HCT116 (cell line): ENCODE measurements at regions of chr4 and their contacts with region 1.

Region 1: DNA sequence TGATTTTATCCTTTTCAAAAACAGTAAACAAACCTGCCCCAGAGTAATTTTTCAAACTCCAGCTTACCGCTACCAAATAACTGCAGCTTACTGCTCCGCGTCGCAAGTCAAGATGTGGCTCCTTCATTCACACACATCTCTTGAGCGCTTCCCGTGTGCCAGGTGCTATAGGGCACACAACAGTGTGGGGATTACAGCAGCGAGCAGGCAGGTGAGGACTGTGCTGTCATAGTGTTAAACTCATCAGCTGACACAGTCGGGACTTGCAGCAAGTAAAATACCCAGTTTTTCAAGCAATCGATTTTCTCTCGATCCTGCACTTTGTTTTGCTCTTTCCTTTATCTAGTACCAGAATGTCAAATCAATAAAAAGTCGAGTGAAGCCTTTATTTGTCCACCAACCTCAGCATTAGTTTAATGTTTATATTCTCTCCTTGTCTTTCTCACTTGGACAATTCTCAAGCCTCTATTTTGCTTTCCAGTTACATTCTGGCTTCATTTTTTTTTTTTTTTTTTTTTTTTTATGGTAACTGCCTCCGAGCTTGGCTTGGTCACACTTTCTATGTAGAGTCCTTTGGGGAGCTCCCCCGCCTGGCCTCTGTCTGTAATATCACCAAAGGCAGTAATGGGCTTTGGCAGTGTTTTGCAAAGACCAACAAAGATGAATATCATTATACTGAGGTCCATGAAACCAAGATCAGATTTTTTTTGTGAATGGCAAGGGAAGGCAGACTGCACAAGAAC is 8.3 kb upstream of the ASB5 start:
- DNase-seq: peak; percentile 39
- ATAC-seq: peak; percentile 96
- H3K4me3 ChIP-seq: no peak overlapping the region
- H3K27ac ChIP-seq: no peak overlapping the region
- H3K4me1 ChIP-seq: peaks cover 3 to 16% of the 10 kb centered on the region in 2 experiments; a peak in 3 of 4 replicates
- H3K27me3 ChIP-seq: no peaks in the 10 kb centered on the region
- CTCF ChIP-seq: peak; percentile 51 to 65 (median 65); a peak in 5 of 6 replicates
- POLR2A ChIP-seq: no peak
- RAD21 ChIP-seq: peak; percentile 64

Region 2: DNA sequence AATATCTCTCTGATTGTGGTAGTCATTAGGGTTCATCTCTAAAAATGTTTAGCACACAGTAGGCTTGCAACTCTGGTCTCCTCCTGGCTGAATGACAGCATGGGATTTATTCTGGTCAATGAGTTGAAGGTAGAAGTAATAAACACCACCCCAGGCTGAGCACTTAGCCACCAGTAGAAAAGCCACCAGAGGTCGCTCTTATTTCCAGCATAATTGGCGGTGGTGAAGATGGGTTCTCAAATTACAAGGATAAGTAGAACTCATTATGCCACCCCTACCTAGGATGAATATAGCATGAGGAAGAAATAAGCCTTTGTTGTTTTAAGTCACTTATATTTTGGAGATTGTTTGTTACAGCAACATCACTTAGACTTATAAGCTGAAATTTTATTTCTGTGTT is 768.0 kb before region 1 on chr4:
- CTCF ChIA-PET with region 1: no interaction called
- POLR2A ChIA-PET with region 1: no interaction called
- RAD21 ChIA-PET with region 1: no interaction called
- intact Hi-C with region 1: no loop called
- DNase-seq: peak; percentile 42
- ATAC-seq: peak; percentile 92
- H3K4me3 ChIP-seq: no peak overlapping the region
- H3K27ac ChIP-seq: no peak overlapping the region
- H3K4me1 ChIP-seq: no peaks in the 10 kb centered on the region
- H3K27me3 ChIP-seq: no peaks in the 10 kb centered on the region
- CTCF ChIP-seq: peak; percentile 24 to 75 (median 66); a peak in 5 of 6 replicates
- POLR2A ChIP-seq: no peak
- RAD21 ChIP-seq: peak; percentile 48

Region 3: DNA sequence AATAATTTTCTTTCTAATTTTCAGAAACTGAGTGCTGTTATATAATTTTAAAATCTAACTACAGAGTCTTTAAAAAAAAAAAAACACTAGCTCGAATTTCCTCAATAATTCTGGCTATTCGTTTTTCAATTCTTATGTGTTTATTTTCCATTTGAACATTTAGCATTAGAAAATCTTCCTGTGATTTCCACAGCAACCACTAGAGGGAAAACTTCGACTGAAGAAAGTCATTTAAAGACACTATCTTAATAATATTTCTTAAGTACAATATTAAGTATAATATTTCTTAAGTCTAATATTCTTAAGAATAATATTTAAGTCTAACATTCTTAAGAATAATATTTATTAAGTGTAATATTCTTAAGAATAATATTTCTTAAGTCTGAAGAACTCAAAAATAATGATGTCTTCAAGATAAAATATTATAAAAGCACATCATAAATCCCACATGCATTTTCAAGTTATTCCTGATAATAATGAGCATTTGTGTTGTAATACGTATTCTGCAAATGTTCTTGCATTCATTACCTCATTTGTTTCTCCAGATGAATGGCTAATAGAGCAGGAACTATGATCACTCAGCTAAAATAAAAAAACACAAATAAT is 330.1 kb before region 1 on chr4:
- CTCF ChIA-PET with region 1: no interaction called
- POLR2A ChIA-PET with region 1: no interaction called
- RAD21 ChIA-PET with region 1: no interaction called
- intact Hi-C with region 1: loop called (anchors 10 kb)
- DNase-seq: peak; percentile 27
- ATAC-seq: no peak
- H3K4me3 ChIP-seq: no peak overlapping the region
- H3K27ac ChIP-seq: no peak overlapping the region
- H3K4me1 ChIP-seq: no peaks in the 10 kb centered on the region
- H3K27me3 ChIP-seq: no peaks in the 10 kb centered on the region
- CTCF ChIP-seq: peak; percentile 41 to 52 (median 47); a peak in 4 of 6 replicates
- POLR2A ChIP-seq: no peak
- RAD21 ChIP-seq: peak; percentile 56; the same call in 1 of the 2 replicates

Region 4: DNA sequence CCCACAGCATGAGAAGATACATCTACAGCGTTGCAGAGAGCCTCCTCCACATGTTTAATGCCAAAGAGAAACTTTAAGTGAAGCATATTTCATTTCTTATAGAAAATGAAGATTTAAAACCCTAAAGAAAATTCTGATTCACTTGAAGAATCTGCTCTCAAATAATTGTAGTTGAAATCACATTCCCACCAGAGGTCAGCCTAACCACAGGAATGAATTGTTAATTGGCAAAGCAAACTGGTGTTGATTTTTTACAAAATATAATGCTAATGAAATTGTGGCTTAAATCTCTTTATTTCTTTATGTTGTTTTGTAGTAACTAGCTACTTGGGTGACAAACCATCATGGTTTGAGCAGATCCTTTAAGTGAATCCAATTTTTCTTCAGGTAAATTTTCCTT is 242.8 kb before region 1 on chr4:
- CTCF ChIA-PET with region 1: interaction called, 5 read pairs
- POLR2A ChIA-PET with region 1: no interaction called
- RAD21 ChIA-PET with region 1: no interaction called
- intact Hi-C with region 1: loop called (anchors 5 kb)
- DNase-seq: peak; percentile 27
- ATAC-seq: no peak
- H3K4me3 ChIP-seq: no peak overlapping the region
- H3K27ac ChIP-seq: no peak overlapping the region
- H3K4me1 ChIP-seq: no peaks in the 10 kb centered on the region
- H3K27me3 ChIP-seq: no peaks in the 10 kb centered on the region
- CTCF ChIP-seq: peak in 2 of 3 experiments; percentile 50 to 54; a peak in 3 of 6 replicates
- POLR2A ChIP-seq: no peak
- RAD21 ChIP-seq: peak; percentile 74

Region 5: DNA sequence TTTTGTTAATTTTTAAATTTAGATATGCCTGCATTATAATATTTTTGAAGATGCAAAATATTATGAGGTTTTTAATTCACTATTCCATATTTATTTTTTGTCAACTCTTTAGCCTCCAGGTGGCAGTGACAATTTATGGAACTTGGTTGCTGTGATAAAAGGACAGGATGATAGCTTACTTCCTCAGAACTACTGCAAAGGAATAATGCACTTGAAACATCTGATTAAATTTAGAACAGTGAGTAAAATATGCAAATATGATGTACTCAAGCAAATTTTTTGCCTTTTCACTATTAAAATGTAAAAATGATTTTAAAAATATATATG is 127.0 kb before region 1 on chr4:
- CTCF ChIA-PET with region 1: interaction called, 4 read pairs
- POLR2A ChIA-PET with region 1: no interaction called
- RAD21 ChIA-PET with region 1: interaction called, 3 to 5 read pairs
- intact Hi-C with region 1: loop called (anchors 5 kb)
- DNase-seq: peak; percentile 23
- ATAC-seq: peak; percentile 55; the same call in 1 of the 2 replicates
- H3K4me3 ChIP-seq: no peak overlapping the region
- H3K27ac ChIP-seq: no peak overlapping the region
- H3K4me1 ChIP-seq: no peaks in the 10 kb centered on the region
- H3K27me3 ChIP-seq: no peaks in the 10 kb centered on the region
- CTCF ChIP-seq: peak; percentile 19 to 73 (median 58); a peak in 5 of 6 replicates
- POLR2A ChIP-seq: no peak
- RAD21 ChIP-seq: peak; percentile 82

Region 6: GRCh38 chr4:176745902-176746301 is 468.6 kb after region 1 on chr4:
- CTCF ChIA-PET with region 1: no interaction called
- POLR2A ChIA-PET with region 1: no interaction called
- RAD21 ChIA-PET with region 1: no interaction called
- intact Hi-C with region 1: no loop called
- DNase-seq: no peak
- ATAC-seq: no peak
- H3K4me3 ChIP-seq: no peak overlapping the region
- H3K27ac ChIP-seq: no peak overlapping the region
- H3K4me1 ChIP-seq: no peaks in the 10 kb centered on the region
- H3K27me3 ChIP-seq: no peaks in the 10 kb centered on the region
- CTCF ChIP-seq: no peak
- POLR2A ChIP-seq: no peak
- RAD21 ChIP-seq: no peak

Region 7: GRCh38 chr4:176789955-176790354 is 512.6 kb after region 1 on chr4:
- CTCF ChIA-PET with region 1: no interaction called
- POLR2A ChIA-PET with region 1: no interaction called
- RAD21 ChIA-PET with region 1: no interaction called
- intact Hi-C with region 1: no loop called
- DNase-seq: peak; percentile 23
- ATAC-seq: peak; percentile 78
- H3K4me3 ChIP-seq: no peak overlapping the region
- H3K27ac ChIP-seq: no peak overlapping the region
- H3K4me1 ChIP-seq: no peaks in the 10 kb centered on the region
- H3K27me3 ChIP-seq: no peaks in the 10 kb centered on the region
- CTCF ChIP-seq: peak; percentile 43 to 72 (median 61); a peak in 5 of 6 replicates
- POLR2A ChIP-seq: no peak
- RAD21 ChIP-seq: peak; percentile 61